HAP-1 (cell line): ENCODE measurements at regions of chr9 and their contacts with region 1.

Region 1: GRCh38 chr9:20884985-20885593 is 146.4 kb downstream of the HACD4 start:
- DNase-seq: peak; percentile 16 to 76
- H3K4me3 ChIP-seq: no peak overlapping the region
- H3K4me1 ChIP-seq: no peaks in the 10 kb centered on the region
- H3K27me3 ChIP-seq: no peaks in the 10 kb centered on the region

Region 2: DNA sequence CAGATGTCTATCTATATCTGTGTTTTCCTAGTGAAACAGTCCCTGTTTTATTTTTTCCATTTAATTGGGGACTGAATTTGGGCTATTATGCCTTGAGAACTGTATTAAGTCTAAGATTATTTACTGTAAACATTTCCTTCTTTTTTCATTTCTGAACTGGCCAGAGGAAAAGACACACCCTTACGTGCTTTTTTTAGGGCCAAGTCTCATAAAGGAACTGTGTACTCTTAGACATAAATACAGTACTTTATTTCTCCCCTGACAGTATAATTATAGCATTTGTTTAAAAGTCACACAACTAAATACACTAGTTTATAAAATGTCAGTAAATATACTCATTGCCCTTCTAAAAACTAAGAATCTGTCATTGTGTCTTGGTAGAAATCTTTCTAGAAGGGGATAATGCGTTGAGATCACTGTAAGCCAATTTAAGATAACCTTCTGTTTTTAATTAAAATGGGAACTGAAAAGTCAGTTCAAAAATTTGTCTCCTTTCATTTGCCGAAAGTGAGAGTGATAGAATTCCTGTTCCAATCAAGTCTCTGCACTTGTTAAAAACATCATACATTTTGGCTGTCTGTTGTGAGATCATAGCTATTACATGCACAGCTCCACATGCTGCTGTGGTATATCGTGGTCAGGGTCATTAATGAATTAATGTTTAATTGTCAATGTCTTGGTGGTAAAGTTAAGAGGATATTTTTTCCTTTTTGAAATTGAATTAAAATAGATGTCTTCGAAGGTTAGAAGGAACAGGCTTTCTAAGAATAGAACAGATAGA is 69.0 kb before region 1 on chr9:
- in situ Hi-C with region 1: no loop called
- DNase-seq: no peak
- H3K4me3 ChIP-seq: no peak overlapping the region
- H3K4me1 ChIP-seq: no peaks in the 10 kb centered on the region; the same call in 1 of the 2 replicates
- H3K27me3 ChIP-seq: no peaks in the 10 kb centered on the region

Region 3: DNA sequence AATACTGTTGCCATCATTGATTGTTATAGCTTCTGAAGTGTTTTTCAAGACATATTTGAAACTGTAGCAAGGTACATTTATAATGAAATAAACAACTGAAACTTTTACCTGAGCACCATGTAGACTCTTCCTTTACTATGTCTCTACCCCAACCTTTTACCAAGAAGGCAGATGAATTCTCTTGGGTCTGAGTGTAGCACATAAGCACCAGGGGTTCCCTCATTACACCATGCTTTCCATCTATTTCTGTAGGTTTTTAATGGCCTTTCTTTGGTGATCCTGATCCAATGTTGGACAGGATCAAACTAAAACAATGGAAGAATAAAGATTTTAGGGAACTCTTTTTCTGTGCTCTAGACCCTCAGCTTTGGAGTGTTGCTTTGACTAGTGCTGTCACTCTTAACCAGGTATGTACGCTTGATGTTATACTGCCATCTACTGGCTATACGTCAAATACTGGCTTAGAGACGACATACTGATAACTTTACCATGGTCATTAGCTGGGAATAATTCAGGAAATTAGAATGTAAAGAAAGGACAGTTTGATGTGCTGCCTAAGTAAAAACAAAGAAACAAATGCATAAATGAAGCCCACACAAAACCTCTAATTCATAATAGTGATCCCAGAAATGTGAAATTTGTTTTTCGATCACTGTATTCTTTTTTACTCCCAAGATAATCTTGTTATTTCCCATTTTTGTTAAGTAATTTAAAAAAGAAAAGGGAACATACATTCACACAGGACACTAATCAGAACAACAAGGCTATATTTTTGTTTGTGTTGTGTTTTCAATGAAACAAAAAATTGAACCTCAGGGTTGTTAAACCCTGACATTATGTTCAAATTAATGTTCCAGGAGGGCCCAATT is 225.9 kb after region 1 on chr9:
- in situ Hi-C with region 1: loop called (anchors 25 kb)
- DNase-seq: peak; percentile 36 to 75
- H3K4me3 ChIP-seq: no peak overlapping the region
- H3K4me1 ChIP-seq: no peaks in the 10 kb centered on the region
- H3K27me3 ChIP-seq: no peaks in the 10 kb centered on the region